K562 (cell line): ENCODE measurements at regions of chrX and their contacts with region 1.

Region 1: DNA sequence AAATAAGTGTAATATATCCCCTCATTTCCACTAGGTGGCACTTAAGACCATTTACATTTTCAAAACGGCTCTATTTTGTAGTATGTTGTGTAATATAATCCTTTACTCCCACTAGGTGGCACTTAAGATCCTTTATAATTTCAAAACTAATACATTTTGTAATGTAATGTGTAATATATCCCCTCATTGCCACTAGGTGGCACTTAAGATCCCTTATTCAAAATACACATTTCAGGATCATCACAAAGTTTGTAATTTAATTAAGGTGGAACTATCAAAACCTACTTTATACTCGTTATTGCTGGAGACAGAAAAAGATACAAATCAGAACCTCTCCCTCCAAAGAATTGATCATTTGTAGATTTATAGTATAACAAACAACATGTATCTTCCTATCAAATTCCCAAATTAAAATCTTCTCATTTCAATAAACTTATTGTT is 132.5 kb downstream of the ARHGAP6 start:
- DNase-seq: peak; percentile 56 to 76 (median 62)
- ATAC-seq: peak; percentile 81
- H3K4me3 ChIP-seq: no peak overlapping the region
- H3K27ac ChIP-seq: no peak overlapping the region
- H3K4me1 ChIP-seq: peaks cover 0 to 18% of the 10 kb centered on the region in 2 experiments; a peak in 2 of 5 replicates
- H3K27me3 ChIP-seq: no peaks in the 10 kb centered on the region
- CTCF ChIP-seq: peak; percentile 58 to 100 (median 98)
- EP300 ChIP-seq: no peak
- POLR2A ChIP-seq: no peak
- RAD21 ChIP-seq: peak; percentile 98

Region 2: GRCh38 chrX:11381464-11381863 is 151.8 kb before region 1 on chrX:
- CTCF ChIA-PET with region 1: interaction called, 15 read pairs
- POLR2A ChIA-PET with region 1: no interaction called
- in situ Hi-C with region 1: no loop called
- intact Hi-C with region 1: loop called (anchors 1 kb)
- DNase-seq: peak; percentile 31 to 84 (median 36)
- ATAC-seq: peak; percentile 88
- H3K4me3 ChIP-seq: no peak overlapping the region
- H3K27ac ChIP-seq: peak overlapping the region; percentile 8; the same call in 1 of the 3 replicates
- H3K4me1 ChIP-seq: peaks cover 10 to 54% of the 10 kb centered on the region in 2 experiments
- H3K27me3 ChIP-seq: no peaks in the 10 kb centered on the region
- CTCF ChIP-seq: peak; percentile 67 to 72 (median 72)
- EP300 ChIP-seq: no peak
- POLR2A ChIP-seq: no peak
- RAD21 ChIP-seq: peak; percentile 61 to 83

Region 3: DNA sequence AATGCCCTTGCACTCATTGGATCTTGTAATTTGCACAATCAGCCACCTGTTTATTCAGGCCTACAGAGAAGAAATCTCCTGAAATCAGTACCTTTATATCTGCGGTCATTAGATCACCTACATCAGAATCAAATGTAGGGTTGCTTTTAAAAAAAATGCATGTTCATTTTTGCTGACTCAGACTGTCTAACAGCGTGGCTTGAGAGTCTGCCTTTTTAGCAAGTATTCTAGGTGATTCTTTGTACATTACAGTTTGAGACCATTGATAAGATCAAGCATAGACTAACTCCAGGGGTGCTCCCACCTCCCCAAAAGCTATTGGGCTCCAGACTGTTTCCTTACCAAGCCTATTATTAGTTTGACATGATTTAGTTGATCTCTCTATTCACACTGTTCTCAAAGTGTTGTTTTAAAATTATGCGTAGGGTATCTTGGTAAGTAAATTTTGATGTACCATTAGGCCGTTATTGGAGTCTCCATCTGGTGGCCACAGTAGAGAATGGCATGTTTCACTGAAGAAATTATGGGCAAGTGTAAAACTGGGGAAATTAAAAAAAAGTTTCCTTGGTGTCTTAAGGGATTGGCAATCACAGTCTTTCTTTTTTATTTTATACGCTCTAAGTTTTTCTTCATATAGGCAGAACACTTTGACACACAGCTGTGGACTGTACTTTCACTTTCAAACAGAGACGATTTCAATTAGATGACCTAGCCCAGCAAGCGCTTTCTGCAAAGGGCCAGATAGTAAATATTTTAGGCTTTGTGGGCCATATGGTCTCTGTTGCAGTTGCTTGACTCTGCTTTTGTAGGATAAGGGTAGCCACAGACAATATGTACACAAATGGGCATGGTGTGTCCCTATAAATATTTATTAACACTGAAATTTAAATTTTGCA is 191.1 kb after region 1 on chrX:
- CTCF ChIA-PET with region 1: interaction called, 20 read pairs
- POLR2A ChIA-PET with region 1: no interaction called
- in situ Hi-C with region 1: no loop called
- intact Hi-C with region 1: loop called (anchors 1 kb)
- DNase-seq: peak; percentile 25 to 35 (median 31)
- ATAC-seq: peak; percentile 71
- H3K4me3 ChIP-seq: no peak overlapping the region
- H3K27ac ChIP-seq: no peak overlapping the region
- H3K4me1 ChIP-seq: no peaks in the 10 kb centered on the region
- H3K27me3 ChIP-seq: peaks cover 0 to 4% of the 10 kb centered on the region in 2 experiments; a peak in 1 of 5 replicates
- CTCF ChIP-seq: peak; percentile 56 to 74 (median 58); a peak in 5 of 6 replicates
- EP300 ChIP-seq: no peak
- POLR2A ChIP-seq: no peak
- RAD21 ChIP-seq: peak; percentile 60 to 67

Region 4: GRCh38 chrX:11770320-11770719 is 237.1 kb after region 1 on chrX:
- CTCF ChIA-PET with region 1: interaction called, 126 read pairs
- POLR2A ChIA-PET with region 1: no interaction called
- in situ Hi-C with region 1: loop called (anchors 5 kb)
- intact Hi-C with region 1: loop called (anchors 1 kb)
- DNase-seq: peak; percentile 64 to 70 (median 66)
- ATAC-seq: peak; percentile 97
- H3K4me3 ChIP-seq: no peak overlapping the region
- H3K27ac ChIP-seq: no peak overlapping the region
- H3K4me1 ChIP-seq: peaks cover 0 to 3% of the 10 kb centered on the region in 2 experiments; a peak in 2 of 5 replicates
- H3K27me3 ChIP-seq: no peaks in the 10 kb centered on the region
- CTCF ChIP-seq: peak; percentile 82 to 93 (median 89)
- EP300 ChIP-seq: no peak
- POLR2A ChIP-seq: no peak
- RAD21 ChIP-seq: peak; percentile 80 to 84

Region 5: GRCh38 chrX:12771445-12772069 is 1238.3 kb after region 1 on chrX:
- CTCF ChIA-PET with region 1: interaction called, 4 read pairs
- POLR2A ChIA-PET with region 1: no interaction called
- in situ Hi-C with region 1: no loop called
- intact Hi-C with region 1: loop called (anchors 10 kb)
- DNase-seq: peak; percentile 65 to 84 (median 71)
- ATAC-seq: peak; percentile 100
- H3K4me3 ChIP-seq: no peak overlapping the region
- H3K27ac ChIP-seq: no peak overlapping the region
- H3K4me1 ChIP-seq: no peaks in the 10 kb centered on the region
- H3K27me3 ChIP-seq: peaks cover 16 to 22% of the 10 kb centered on the region in 2 experiments
- CTCF ChIP-seq: peak; percentile 95 to 100 (median 100)
- EP300 ChIP-seq: no peak
- POLR2A ChIP-seq: no peak
- RAD21 ChIP-seq: peak; percentile 38 to 63